HepG2 (cell line): ENCODE measurements at regions of chr20 and their contacts with region 1.

Region 1: GRCh38 chr20:38604861-38605303 is 3.3 kb downstream of the ARHGAP40 start:
- DNase-seq: peak; percentile 100
- ATAC-seq: peak; percentile 95
- H3K4me3 ChIP-seq: no peak overlapping the region; a peak in 1 of 6 replicates
- H3K27ac ChIP-seq: peak overlapping the region; percentile 13
- H3K4me1 ChIP-seq: peaks cover 74% of the 10 kb centered on the region
- H3K27me3 ChIP-seq: peaks cover 4 to 52% of the 10 kb centered on the region in 2 experiments; a peak in 4 of 5 replicates
- CTCF ChIP-seq: peak; percentile 27
- EP300 ChIP-seq: peak; percentile 59 to 95; a peak in 2 of 4 replicates
- POLR2A ChIP-seq: no peak
- RAD21 ChIP-seq: no peak

Region 2: GRCh38 chr20:38472513-38473372 is 132.1 kb before region 1 on chr20 and contains the start of gene RALGAPB:
- CTCF ChIA-PET with region 1: no interaction called
- POLR2A ChIA-PET with region 1: no interaction called
- in situ Hi-C with region 1: no loop called
- intact Hi-C with region 1: no loop called
- DNase-seq: peak; percentile 100
- ATAC-seq: peak; percentile 93
- H3K4me3 ChIP-seq: peak within 1 kb of the TSS; percentile 76 to 96 (median 90)
- H3K27ac ChIP-seq: peak within 1 kb of the TSS; percentile 67
- H3K4me1 ChIP-seq: peaks cover 43% of the 10 kb centered on the region
- H3K27me3 ChIP-seq: no peaks in the 10 kb centered on the region; a peak in 1 of 5 replicates
- CTCF ChIP-seq: peak; percentile 96
- EP300 ChIP-seq: peak in 1 of 2 experiments; percentile 28; a peak in 2 of 4 replicates
- POLR2A ChIP-seq: peak; percentile 82 to 92
- RAD21 ChIP-seq: peak; percentile 63
- total RNA-seq, gene RALGAPB: 30.6 and 36.5 TPM in 2 replicates

Region 3: GRCh38 chr20:38585404-38586180 is 19.3 kb before region 1 on chr20:
- CTCF ChIA-PET with region 1: no interaction called
- POLR2A ChIA-PET with region 1: interaction called, 3 read pairs
- in situ Hi-C with region 1: no loop called
- intact Hi-C with region 1: loop called (anchors 1 kb)
- DNase-seq: peak; percentile 96
- ATAC-seq: peak; percentile 94
- H3K4me3 ChIP-seq: peak overlapping the region in 1 of 3 experiments; percentile 40; a peak in 2 of 6 replicates
- H3K27ac ChIP-seq: peak overlapping the region; percentile 67
- H3K4me1 ChIP-seq: peaks cover 54% of the 10 kb centered on the region
- H3K27me3 ChIP-seq: peaks cover 0 to 1% of the 10 kb centered on the region in 2 experiments; a peak in 3 of 5 replicates
- CTCF ChIP-seq: peak; percentile 26; the same call in 1 of the 2 replicates
- EP300 ChIP-seq: peak in 1 of 2 experiments; percentile 83; a peak in 3 of 4 replicates
- POLR2A ChIP-seq: peak; percentile 60 to 72; a peak in 3 of 4 replicates
- RAD21 ChIP-seq: peak; percentile 37; the same call in 1 of the 2 replicates

Region 4: DNA sequence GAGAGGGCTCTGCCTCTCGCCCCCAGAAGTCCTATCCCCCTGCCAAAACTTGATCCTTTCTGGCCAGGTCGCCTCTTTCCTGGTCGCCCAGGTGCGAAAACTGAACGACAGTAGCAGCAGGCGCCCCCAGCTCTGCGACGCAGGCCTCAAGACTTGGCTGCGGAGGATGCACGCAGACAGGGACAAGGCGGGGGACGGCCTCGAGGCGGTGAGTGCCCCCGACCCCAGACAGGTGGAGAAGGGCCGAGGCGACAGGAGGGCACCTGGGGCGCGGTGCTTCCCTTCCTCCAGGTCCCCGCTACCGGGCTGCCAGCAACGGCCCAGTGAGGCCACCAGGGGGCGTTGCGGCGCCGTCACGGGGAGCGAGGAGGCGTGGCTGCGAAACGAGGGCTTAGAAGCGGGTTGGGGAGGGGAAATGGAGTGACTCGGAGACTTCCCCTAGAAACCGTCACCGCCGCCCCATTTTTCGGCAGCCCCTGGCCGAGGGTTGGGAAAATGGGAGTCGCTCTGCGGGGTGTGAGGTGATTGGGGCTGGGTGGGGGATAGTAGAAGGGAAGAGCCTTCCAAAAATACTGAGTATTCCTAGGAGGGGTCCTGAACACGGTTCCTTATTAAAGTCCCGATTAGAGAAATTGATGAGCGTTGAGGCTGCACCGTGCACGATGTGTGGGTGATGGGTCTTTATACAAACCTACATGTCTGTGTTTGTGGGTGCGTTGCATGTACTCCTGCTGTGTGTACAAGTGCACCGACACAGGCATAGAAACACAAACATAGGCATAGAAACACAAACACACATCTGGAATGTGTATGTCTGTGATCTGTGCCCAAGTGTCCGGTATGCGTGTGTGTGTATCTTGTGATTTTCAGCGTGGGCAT is 41.3 kb after region 1 on chr20:
- CTCF ChIA-PET with region 1: no interaction called
- POLR2A ChIA-PET with region 1: no interaction called
- in situ Hi-C with region 1: no loop called
- intact Hi-C with region 1: no loop called
- DNase-seq: peak; percentile 71
- ATAC-seq: peak; percentile 87
- H3K4me3 ChIP-seq: peak overlapping the region in 1 of 3 experiments; percentile 42; a peak in 1 of 6 replicates
- H3K27ac ChIP-seq: no peak overlapping the region
- H3K4me1 ChIP-seq: peaks cover 25% of the 10 kb centered on the region
- H3K27me3 ChIP-seq: peaks cover 2 to 17% of the 10 kb centered on the region in 2 experiments; a peak in 3 of 5 replicates
- CTCF ChIP-seq: peak; percentile 100
- EP300 ChIP-seq: peak in 1 of 2 experiments; percentile 64; a peak in 1 of 4 replicates
- POLR2A ChIP-seq: no peak
- RAD21 ChIP-seq: peak; percentile 99